T-cell (primary cell): ENCODE measurements at regions of chr19 and their contacts with region 1.

Region 1: DNA sequence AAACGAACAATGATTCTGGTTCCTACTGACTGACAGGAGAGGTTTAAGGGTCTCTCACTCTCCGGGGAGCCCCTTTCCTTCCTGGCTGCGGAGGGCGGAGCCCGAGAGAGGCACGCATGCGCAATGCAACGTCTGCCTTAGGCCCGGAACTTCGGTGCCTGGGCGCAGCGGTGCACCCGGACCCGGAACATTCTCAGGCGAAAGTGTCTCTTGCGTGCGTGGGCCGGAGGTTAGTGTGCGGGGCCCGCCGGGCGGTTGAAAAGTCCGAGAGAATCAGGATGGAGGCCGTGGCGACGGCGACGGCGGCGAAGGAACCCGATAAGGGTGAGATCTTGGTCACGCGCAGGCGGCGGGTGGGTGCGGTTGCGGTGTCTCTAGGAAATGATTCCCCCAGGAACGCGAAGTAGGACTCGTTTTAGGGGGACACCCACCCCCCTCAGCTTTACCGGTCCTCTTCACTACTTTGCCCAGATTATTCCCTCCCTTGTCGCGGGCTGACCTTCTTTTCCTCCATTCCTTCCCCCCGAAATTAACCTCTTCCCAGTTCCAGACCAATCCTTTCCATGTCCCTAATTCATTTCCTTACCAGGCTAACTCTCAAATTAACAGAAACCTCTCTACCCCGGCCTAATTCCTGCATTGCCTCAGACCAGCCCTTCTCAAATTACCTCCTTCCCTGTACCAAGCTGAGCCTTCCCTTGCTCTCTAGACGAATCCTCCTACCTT is at the start of gene CCDC97:
- DNase-seq: peak; percentile 73 to 94 (median 85)
- ATAC-seq: peak; percentile 66 to 72 (median 70)
- H3K4me3 ChIP-seq: peak within 1 kb of the TSS; percentile 96 to 99
- H3K4me3 Mint-ChIP-seq: peak within 1 kb of the TSS; percentile 90 to 98 (median 95)
- H3K27ac ChIP-seq: peak within 1 kb of the TSS; percentile 97
- H3K27ac Mint-ChIP-seq: peak within 1 kb of the TSS; percentile 96 to 99
- H3K4me1 ChIP-seq: peaks cover 45 to 75% of the 10 kb centered on the region in 2 experiments
- H3K4me1 Mint-ChIP-seq: peaks cover 79 to 86% (median 83%) of the 10 kb centered on the region in 3 donors
- H3K27me3 ChIP-seq: no peaks in the 10 kb centered on the region
- H3K27me3 Mint-ChIP-seq: no peaks in the 10 kb centered on the region
- total RNA-seq, gene CCDC97: 38.9 to 61.5 (median 55.1) TPM

Region 2: GRCh38 chr19:41298348-41298964 is 11.7 kb before region 1 on chr19:
- CTCF ChIA-PET with region 1: interaction called, 4 to 9 read pairs
- POLR2A ChIA-PET with region 1: interaction called, 3 to 17 read pairs
- DNase-seq: peak in 28 of 35 experiments; percentile 16 to 70 (median 48)
- ATAC-seq: peak in 2 of 4 experiments; percentile 16 to 59
- H3K4me3 ChIP-seq: no peak overlapping the region
- H3K4me3 Mint-ChIP-seq: peak overlapping the region in 2 of 3 donors; percentile 34 to 48
- H3K27ac ChIP-seq: peak overlapping the region; percentile 97
- H3K27ac Mint-ChIP-seq: peak overlapping the region; percentile 96 to 99
- H3K4me1 ChIP-seq: peaks cover 38 to 72% of the 10 kb centered on the region in 2 experiments
- H3K4me1 Mint-ChIP-seq: peaks cover 89 to 94% (median 90%) of the 10 kb centered on the region in 3 donors
- H3K27me3 ChIP-seq: no peaks in the 10 kb centered on the region
- H3K27me3 Mint-ChIP-seq: no peaks in the 10 kb centered on the region

Region 3: DNA sequence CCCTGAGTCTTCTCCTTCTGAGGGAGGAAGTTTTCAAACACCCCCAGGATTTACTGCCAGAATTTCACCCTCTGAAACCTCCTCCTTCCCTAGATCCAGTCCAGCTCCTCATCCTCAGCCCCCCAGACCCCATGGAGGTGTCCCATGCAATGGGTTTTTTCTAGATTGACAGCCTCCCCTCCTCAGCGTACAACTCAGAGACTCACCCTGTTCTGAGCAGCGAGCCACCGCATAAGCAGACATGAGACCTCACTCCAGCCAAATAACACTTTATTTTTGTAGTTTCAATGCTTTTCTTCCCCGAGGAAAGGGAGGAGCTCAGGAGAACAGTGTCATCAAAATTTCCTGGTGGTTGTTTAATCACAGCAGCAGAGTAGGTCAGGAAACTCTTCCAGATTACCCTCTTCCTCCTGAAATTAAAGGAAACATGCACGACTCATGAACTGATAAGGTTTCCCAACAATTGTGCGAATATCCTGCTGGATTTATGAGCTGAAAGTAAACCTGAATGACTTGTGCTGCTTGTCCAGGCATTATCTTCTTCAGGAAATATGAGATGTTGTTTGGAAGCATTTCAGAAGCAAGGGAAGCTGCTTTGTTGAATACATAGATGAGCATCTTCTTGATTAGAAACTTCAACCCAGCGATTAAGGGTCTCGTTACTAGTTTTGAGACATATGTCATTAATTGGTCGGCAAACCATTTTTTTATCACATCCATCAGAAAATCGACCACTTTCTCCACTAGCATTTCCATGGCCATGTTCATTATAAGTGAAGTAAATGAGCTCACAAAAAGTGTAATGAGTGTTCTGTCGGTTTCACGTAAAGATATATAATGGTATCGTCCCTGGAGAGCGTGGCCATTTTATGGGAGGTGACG is 168.9 kb after region 1 on chr19:
- CTCF ChIA-PET with region 1: no interaction called
- POLR2A ChIA-PET with region 1: interaction called in 1 of 2 experiments, 11 read pairs
- DNase-seq: no peak
- ATAC-seq: no peak
- H3K4me3 ChIP-seq: no peak overlapping the region
- H3K4me3 Mint-ChIP-seq: no peak overlapping the region
- H3K27ac ChIP-seq: no peak overlapping the region
- H3K27ac Mint-ChIP-seq: no peak overlapping the region
- H3K4me1 ChIP-seq: no peaks in the 10 kb centered on the region
- H3K4me1 Mint-ChIP-seq: no peaks in the 10 kb centered on the region
- H3K27me3 ChIP-seq: peaks cover 4 to 37% of the 10 kb centered on the region in 2 experiments
- H3K27me3 Mint-ChIP-seq: peaks cover 42 to 49% of the 10 kb centered on the region in 2 donors